BJ (cell line): ENCODE measurements at regions of chr11 and their contacts with region 1.

Region 1: GRCh38 chr11:113781679-113782078 is 2.1 kb downstream of the CLDN25 start:
- DNase-seq: no peak
- H3K4me3 ChIP-seq: no peak overlapping the region
- H3K27me3 ChIP-seq: peaks cover 3% of the 10 kb centered on the region
- CTCF ChIP-seq: no peak

Region 2: DNA sequence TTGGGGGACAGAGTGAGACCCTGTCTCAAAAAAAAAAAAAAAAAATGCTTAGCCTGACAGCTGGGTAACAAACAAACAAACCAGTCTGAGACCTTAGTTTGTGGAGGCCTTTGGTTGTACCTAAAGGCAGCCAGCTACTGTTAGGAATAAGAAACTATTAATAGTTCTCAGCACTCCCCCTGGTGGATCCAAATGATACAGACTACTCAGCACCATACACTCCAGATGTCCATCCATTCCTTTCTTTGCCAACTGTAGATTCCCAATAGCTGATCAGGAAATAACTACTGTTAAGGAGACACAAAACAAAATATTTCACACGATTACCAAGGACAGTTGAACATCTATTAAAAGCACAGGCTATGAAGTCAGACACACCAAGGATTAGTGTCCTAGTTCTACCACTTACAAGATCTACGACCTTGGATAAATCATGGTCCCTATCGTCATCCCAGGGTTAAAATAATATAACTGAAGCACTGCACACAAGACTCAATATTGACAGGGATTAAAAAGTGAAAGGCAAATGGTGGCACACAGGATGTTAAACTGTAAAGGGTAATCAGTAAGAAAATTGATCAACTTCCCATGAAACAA is 15.1 kb after region 1 on chr11:
- CTCF ChIA-PET with region 1: interaction called, 20 read pairs
- POLR2A ChIA-PET with region 1: no interaction called
- DNase-seq: no peak
- H3K4me3 ChIP-seq: no peak overlapping the region
- H3K27me3 ChIP-seq: no peaks in the 10 kb centered on the region
- CTCF ChIP-seq: peak; percentile 78

Region 3: DNA sequence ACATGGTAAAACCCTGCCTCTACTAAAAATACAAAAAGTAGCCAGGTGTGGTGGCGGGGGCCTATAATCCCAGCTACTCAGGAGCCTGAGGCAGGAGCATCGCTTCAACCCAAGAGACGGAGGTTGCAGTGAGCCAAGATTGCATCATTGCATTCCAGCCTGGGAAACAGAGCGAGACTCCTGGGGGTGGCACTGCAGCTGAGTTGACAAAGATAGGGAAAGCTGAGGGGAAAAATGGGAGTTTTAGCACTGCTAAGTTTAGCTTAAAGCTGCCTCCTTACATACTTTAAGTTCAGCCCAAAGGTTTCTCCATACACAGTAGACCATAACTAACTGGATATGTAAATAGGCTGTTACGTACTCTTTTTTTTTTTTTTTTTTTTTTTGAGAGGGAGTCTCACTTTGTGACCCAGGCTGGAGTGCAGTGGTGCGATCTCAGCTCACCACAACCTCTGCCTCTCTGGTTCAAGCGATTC is 102.7 kb after region 1 on chr11:
- CTCF ChIA-PET with region 1: no interaction called
- POLR2A ChIA-PET with region 1: no interaction called
- DNase-seq: no peak
- H3K4me3 ChIP-seq: no peak overlapping the region
- H3K27me3 ChIP-seq: no peaks in the 10 kb centered on the region
- CTCF ChIP-seq: no peak